ENCODE measurements at regions of chr3 and their contacts with region 1.

Region 1: GRCh38 chr3:45043728-45044299 is 17.7 kb downstream of the CLEC3B start:
- DNase-seq: no peak
- H3K4me3 Mint-ChIP-seq: no peak overlapping the region
- H3K27ac Mint-ChIP-seq: no peak overlapping the region
- H3K4me1 Mint-ChIP-seq: peaks cover 21% of the 10 kb centered on the region
- H3K27me3 Mint-ChIP-seq: peaks cover 25% of the 10 kb centered on the region

Region 2: GRCh38 chr3:45055411-45056143 is 11.8 kb after region 1 on chr3:
- CTCF ChIA-PET with region 1: interaction called, 95 read pairs
- POLR2A ChIA-PET with region 1: interaction called, 14 read pairs
- DNase-seq: no peak
- H3K4me3 Mint-ChIP-seq: no peak overlapping the region
- H3K27ac Mint-ChIP-seq: no peak overlapping the region
- H3K4me1 Mint-ChIP-seq: peaks cover 33% of the 10 kb centered on the region
- H3K27me3 Mint-ChIP-seq: peaks cover 6% of the 10 kb centered on the region

Region 3: GRCh38 chr3:45118615-45119071 is 74.8 kb after region 1 on chr3:
- CTCF ChIA-PET with region 1: interaction called, 24 read pairs
- POLR2A ChIA-PET with region 1: interaction called, 9 read pairs
- DNase-seq: peak; percentile 30
- H3K4me3 Mint-ChIP-seq: peak overlapping the region; percentile 29
- H3K27ac Mint-ChIP-seq: peak overlapping the region; percentile 86
- H3K4me1 Mint-ChIP-seq: peaks cover 57% of the 10 kb centered on the region
- H3K27me3 Mint-ChIP-seq: peaks cover 22% of the 10 kb centered on the region

Region 4: DNA sequence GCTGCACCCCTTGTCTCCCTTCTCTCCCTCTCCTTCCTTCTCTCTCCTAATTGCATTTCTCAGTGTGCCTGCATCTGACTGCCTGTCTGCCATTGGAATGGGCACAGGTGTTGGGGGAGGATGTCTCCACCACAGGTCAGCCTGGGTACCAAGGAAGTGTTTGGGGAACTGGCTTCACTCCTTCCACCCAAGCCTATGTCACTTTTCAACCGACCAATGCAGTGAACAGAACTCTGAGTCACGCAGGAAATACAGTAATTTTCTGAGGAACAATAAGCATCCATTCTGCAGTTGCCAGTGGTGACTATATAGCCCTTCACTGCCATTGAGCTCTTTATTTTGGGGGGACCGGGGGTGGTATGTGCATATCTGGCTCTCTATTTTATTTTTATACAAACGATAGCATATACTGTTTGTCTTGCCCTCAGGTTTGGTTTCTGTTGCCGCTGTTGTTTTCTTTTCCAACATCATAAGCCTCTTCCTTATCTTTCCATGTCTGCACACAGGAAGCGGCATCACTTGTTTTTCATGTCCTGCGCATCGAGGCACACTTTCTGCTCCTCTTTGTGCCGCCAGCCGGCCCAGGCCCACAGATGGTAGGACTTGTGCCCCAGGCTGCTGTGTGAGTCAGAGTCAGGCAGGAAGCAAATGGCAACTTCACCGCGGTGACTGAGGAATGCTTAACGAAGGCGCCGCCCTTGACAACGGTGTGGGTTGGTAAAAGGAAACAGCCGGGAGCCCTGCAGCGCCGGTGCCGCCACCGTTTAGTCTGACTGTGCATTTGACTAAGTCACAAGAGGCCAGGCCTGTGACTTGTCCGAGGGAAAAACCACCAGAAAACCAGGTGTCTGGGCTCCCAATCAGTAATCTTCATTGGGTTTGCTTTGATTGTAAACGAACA is 123.4 kb after region 1 on chr3:
- CTCF ChIA-PET with region 1: interaction called, 12 read pairs
- POLR2A ChIA-PET with region 1: interaction called, 6 read pairs
- DNase-seq: peak; percentile 91
- H3K4me3 Mint-ChIP-seq: peak overlapping the region; percentile 47
- H3K27ac Mint-ChIP-seq: peak overlapping the region; percentile 91
- H3K4me1 Mint-ChIP-seq: peaks cover 48% of the 10 kb centered on the region
- H3K27me3 Mint-ChIP-seq: peaks cover 7% of the 10 kb centered on the region

Region 5: DNA sequence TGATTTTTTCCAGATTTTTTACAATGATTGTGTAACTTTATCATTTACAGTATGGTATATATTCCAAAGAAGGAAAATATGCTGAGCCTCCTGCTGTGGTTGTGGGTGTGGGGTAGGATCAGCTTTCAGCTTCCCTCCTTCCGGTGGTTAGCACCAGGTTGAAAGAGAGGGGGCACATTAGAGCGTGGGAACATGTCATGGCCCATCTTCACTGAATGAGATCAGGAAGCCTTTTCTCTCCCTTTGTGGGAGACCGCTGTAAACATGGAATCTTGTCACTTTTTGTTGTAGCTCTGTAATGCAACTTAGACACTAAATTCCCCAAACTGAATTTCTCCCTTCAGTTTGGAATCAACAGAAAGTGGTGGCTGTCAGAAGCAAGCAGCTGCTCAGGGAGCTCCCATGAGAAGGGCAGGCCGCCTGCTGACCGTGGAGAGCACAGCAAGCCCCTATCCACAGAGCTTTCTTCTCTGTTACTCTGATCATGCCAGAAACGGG is 464.1 kb after region 1 on chr3:
- CTCF ChIA-PET with region 1: interaction called, 20 read pairs
- POLR2A ChIA-PET with region 1: no interaction called
- DNase-seq: no peak
- H3K4me3 Mint-ChIP-seq: no peak overlapping the region
- H3K27ac Mint-ChIP-seq: no peak overlapping the region
- H3K4me1 Mint-ChIP-seq: no peaks in the 10 kb centered on the region
- H3K27me3 Mint-ChIP-seq: no peaks in the 10 kb centered on the region

Measured in activated CD4-positive, alpha-beta memory T cell treated with anti-CD3 and anti-CD28 coated beads, Interleukin-2, amount 10 ng/mL, durations not matched to agents 7 days and 5 days (primary cell).